Mammary epithelial cell (primary cell): ENCODE measurements at regions of chr13 and their contacts with region 1.

Region 1: GRCh38 chr13:35818633-35819067 is 312.5 kb downstream of the DCLK1 start:
- DNase-seq: peak; percentile 13
- H3K4me3 ChIP-seq: no peak overlapping the region
- H3K27ac ChIP-seq: no peak overlapping the region
- H3K4me1 ChIP-seq: no peaks in the 10 kb centered on the region
- H3K27me3 ChIP-seq: no peaks in the 10 kb centered on the region
- CTCF ChIP-seq: peak; percentile 47 to 66

Region 2: GRCh38 chr13:35781036-35782000 is 37.3 kb before region 1 on chr13:
- CTCF ChIA-PET with region 1: no interaction called
- dilution Hi-C with region 1: no loop called
- in situ Hi-C with region 1: no loop called
- intact Hi-C with region 1: no loop called
- DNase-seq: no peak
- H3K4me3 ChIP-seq: no peak overlapping the region
- H3K27ac ChIP-seq: no peak overlapping the region
- H3K4me1 ChIP-seq: no peaks in the 10 kb centered on the region
- H3K27me3 ChIP-seq: no peaks in the 10 kb centered on the region
- CTCF ChIP-seq: no peak

Region 3: DNA sequence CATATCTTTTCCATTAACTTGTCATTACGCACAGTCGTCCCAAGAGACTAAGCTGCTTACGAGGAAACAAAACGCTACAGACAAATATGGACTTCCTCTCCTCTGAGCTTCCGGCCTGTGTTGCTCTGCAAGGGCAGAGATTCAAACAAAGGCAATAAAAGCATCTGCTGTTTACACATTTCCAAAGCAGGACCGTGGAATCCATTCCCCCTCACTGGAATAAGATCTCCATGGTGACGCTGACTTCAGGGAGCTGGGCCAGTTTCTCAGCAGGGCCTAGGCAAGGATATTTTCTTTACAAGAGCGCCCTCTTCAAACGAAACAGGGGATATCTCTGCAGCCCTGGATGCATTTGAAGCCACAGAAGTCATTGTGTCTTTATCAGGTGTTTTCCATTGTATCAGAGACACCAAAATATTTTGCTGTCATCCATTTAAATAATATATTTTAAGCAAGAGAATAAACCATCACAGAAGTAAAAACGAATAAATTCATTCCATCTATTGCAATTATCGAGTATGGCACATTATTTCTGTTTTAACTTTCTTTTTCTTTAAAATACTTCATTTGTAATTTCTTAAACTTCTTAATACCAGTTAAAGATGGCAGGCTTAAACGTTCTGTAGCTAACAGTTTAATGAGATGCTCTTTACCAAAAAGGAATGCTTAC is 135.0 kb after region 1 on chr13:
- CTCF ChIA-PET with region 1: no interaction called
- dilution Hi-C with region 1: no loop called
- in situ Hi-C with region 1: no loop called
- intact Hi-C with region 1: loop called (anchors 1 kb)
- DNase-seq: peak; percentile 38
- H3K4me3 ChIP-seq: no peak overlapping the region
- H3K27ac ChIP-seq: no peak overlapping the region
- H3K4me1 ChIP-seq: no peaks in the 10 kb centered on the region
- H3K27me3 ChIP-seq: no peaks in the 10 kb centered on the region
- CTCF ChIP-seq: peak; percentile 42 to 66

Region 4: GRCh38 chr13:36006348-36006747 is 187.7 kb after region 1 on chr13:
- CTCF ChIA-PET with region 1: no interaction called
- dilution Hi-C with region 1: no loop called
- in situ Hi-C with region 1: no loop called
- intact Hi-C with region 1: no loop called
- DNase-seq: no peak
- H3K4me3 ChIP-seq: no peak overlapping the region
- H3K27ac ChIP-seq: no peak overlapping the region
- H3K4me1 ChIP-seq: no peaks in the 10 kb centered on the region
- H3K27me3 ChIP-seq: no peaks in the 10 kb centered on the region
- CTCF ChIP-seq: no peak

Region 5: GRCh38 chr13:36231236-36231635 is 412.6 kb after region 1 on chr13:
- CTCF ChIA-PET with region 1: no interaction called
- dilution Hi-C with region 1: no loop called
- in situ Hi-C with region 1: no loop called
- intact Hi-C with region 1: no loop called
- DNase-seq: no peak
- H3K4me3 ChIP-seq: no peak overlapping the region
- H3K27ac ChIP-seq: no peak overlapping the region
- H3K4me1 ChIP-seq: no peaks in the 10 kb centered on the region
- H3K27me3 ChIP-seq: no peaks in the 10 kb centered on the region
- CTCF ChIP-seq: no peak